Calu3 (cell line): ENCODE measurements at regions of chr6 and their contacts with region 1.

Region 1: DNA sequence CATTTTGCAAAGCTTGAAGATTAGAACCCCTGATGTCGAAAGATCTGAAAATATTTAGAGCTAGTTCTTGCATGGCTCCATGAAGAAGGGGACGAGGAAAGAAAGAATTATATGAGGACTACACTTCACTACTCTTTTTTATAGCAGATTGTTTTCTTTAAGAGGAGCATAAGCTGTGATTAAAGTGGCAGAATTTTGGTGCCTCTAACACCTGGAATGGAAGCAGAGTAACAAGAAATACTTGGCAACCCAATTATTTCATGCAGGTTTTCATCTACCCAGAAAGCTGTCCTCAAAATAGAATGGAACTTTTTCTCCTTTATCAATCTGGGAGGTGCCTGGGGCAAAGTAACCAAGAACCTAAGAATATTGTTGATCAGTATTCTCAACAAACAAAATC is 4.0 kb downstream of the METTL24 start:
- DNase-seq: no peak
- H3K4me3 Mint-ChIP-seq: no peak overlapping the region
- H3K27ac Mint-ChIP-seq: no peak overlapping the region
- H3K4me1 Mint-ChIP-seq: peaks cover 6% of the 10 kb centered on the region
- H3K27me3 Mint-ChIP-seq: peaks cover 38% of the 10 kb centered on the region
- CTCF ChIP-seq: no peak

Region 2: DNA sequence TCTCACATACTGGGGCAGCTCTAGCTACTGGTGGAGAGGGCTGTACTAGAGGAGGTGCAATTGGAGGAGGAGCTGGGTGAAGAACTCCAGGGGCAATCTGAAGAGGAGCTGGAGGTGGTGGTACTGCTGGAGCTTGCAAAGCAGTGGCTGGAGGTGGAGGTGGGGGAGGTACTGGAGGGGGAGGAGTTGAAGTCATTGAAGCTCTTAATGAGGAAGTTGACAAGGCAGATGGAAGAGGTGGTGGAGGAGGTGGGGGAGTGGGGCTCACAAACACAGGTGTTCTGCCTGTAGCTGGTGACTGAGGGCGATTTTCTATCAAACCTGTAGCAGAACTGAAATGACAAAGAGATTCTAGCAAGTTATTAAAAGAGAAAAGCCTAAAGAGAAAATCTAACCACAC is 252.3 kb before region 1 on chr6:
- CTCF ChIA-PET with region 1: no interaction called
- intact Hi-C with region 1: no loop called
- DNase-seq: no peak
- H3K4me3 Mint-ChIP-seq: no peak overlapping the region
- H3K27ac Mint-ChIP-seq: no peak overlapping the region
- H3K4me1 Mint-ChIP-seq: peaks cover 6% of the 10 kb centered on the region
- H3K27me3 Mint-ChIP-seq: no peaks in the 10 kb centered on the region
- CTCF ChIP-seq: no peak

Region 3: GRCh38 chr6:110116258-110116657 is 237.9 kb before region 1 on chr6:
- CTCF ChIA-PET with region 1: no interaction called
- intact Hi-C with region 1: no loop called
- DNase-seq: peak; percentile 8
- H3K4me3 Mint-ChIP-seq: no peak overlapping the region
- H3K27ac Mint-ChIP-seq: no peak overlapping the region
- H3K4me1 Mint-ChIP-seq: peaks cover 8% of the 10 kb centered on the region
- H3K27me3 Mint-ChIP-seq: no peaks in the 10 kb centered on the region
- CTCF ChIP-seq: no peak

Region 4: GRCh38 chr6:110331816-110332215 is 22.3 kb before region 1 on chr6:
- CTCF ChIA-PET with region 1: interaction called, 14 read pairs
- intact Hi-C with region 1: no loop called
- DNase-seq: no peak
- H3K4me3 Mint-ChIP-seq: no peak overlapping the region
- H3K27ac Mint-ChIP-seq: no peak overlapping the region
- H3K4me1 Mint-ChIP-seq: no peaks in the 10 kb centered on the region
- H3K27me3 Mint-ChIP-seq: peaks cover 6% of the 10 kb centered on the region
- CTCF ChIP-seq: no peak